ENCODE measurements at regions of chr3 and their contacts with region 1.

Region 1: DNA sequence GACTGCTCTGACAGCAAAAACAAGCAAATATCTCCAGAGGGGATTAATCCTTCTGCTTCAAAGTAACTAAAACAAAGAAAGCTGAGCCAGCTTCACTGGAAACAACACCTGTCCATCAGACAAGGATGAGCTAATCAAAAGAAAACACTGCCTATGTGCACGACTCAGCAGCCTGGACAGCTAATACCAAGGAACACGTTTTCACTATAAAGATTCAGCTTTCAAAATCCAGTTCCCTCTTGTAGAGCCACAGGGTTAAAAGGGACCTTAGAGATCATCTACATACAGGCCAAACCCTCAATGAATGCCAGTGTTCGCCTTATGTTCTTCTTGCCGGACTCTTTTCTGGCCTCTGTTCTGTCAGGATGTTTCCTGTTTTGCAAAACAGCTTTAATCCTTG is 6.9 kb downstream of the TUSC7 start:
- DNase-seq: peak; percentile 45 to 47
- H3K4me3 ChIP-seq: no peak overlapping the region
- H3K4me3 Mint-ChIP-seq: no peak overlapping the region
- H3K27ac Mint-ChIP-seq: peak overlapping the region; percentile 14
- H3K4me1 ChIP-seq: peaks cover 34% of the 10 kb centered on the region
- H3K4me1 Mint-ChIP-seq: peaks cover 37% of the 10 kb centered on the region
- H3K27me3 ChIP-seq: no peaks in the 10 kb centered on the region
- H3K27me3 Mint-ChIP-seq: no peaks in the 10 kb centered on the region
- CTCF ChIP-seq: no peak

Region 2: DNA sequence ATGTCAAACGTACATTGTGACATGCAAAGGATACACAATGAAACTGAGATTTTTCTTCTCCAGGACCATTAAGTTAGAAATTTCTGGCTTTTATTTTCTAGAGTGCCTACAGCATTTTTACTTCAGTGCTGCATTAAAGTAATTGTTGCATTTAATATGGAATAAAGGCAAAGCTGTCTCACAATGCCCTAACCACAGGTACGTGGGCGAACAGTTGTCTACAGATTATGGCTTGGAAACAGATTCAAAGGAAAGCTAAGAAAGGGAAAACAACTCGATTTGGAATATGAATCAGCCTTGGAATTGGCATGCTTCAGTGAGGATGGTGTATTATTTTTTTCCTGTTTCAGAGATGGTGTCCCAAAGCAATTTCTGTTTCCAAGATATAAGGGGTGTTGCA is 86.0 kb before region 1 on chr3:
- CTCF ChIA-PET with region 1: no interaction called
- POLR2A ChIA-PET with region 1: no interaction called
- intact Hi-C with region 1: loop called (anchors 5 kb)
- DNase-seq: no peak
- H3K4me3 ChIP-seq: no peak overlapping the region
- H3K4me3 Mint-ChIP-seq: no peak overlapping the region
- H3K27ac Mint-ChIP-seq: no peak overlapping the region
- H3K4me1 ChIP-seq: peaks cover 3% of the 10 kb centered on the region; the same call in 1 of the 2 replicates
- H3K4me1 Mint-ChIP-seq: no peaks in the 10 kb centered on the region
- H3K27me3 ChIP-seq: no peaks in the 10 kb centered on the region
- H3K27me3 Mint-ChIP-seq: peaks cover 3% of the 10 kb centered on the region
- CTCF ChIP-seq: no peak

Region 3: DNA sequence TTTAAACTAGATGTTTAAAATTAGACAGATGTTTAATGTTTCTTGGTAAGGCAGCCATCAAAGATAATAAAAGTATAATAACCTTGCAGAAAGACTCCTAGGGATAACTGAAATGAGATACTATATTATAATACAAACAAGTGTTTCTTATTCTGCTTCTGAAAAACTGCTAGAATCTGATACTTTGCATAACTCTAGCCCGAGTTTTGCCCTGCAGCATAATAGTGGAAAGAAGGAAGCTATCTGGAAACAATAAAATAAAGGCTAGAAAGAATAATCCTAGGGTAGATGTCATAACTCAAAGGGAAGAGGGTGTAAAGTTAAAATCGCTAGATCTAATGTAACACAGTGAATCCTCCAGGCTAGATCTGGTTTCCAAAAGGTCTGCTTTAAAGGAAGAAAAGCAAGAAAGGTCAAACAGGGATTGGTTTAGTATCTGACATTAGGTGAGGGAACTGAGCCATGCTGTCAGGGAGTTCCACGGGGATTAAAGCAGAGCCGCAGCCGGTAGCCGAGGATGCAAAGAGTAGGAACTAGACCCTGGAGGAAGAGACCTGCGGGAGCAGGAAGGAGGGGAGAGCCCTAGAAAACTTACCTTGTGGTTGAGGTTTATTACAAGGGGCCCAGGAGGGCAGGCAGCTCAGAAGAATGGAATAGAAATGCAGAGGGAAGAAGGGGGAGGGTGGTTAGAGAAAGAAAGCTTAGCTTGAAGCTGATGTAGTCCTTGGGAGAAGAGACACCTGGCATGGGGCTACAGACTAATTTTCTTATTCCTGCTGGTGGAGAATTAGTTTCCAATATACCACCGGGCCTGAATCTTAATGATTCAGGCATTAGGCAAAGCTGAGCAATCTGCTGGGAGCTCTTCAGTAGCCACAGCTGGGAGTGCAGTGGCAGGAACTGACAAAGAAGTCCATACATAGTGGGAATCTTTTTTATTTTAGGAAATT is 53.1 kb before region 1 on chr3:
- CTCF ChIA-PET with region 1: no interaction called
- POLR2A ChIA-PET with region 1: no interaction called
- intact Hi-C with region 1: loop called (anchors 1 kb)
- DNase-seq: no peak
- H3K4me3 ChIP-seq: no peak overlapping the region
- H3K4me3 Mint-ChIP-seq: no peak overlapping the region
- H3K27ac Mint-ChIP-seq: peak overlapping the region; percentile 27
- H3K4me1 ChIP-seq: peaks cover 8% of the 10 kb centered on the region
- H3K4me1 Mint-ChIP-seq: peaks cover 17% of the 10 kb centered on the region
- H3K27me3 ChIP-seq: no peaks in the 10 kb centered on the region
- H3K27me3 Mint-ChIP-seq: no peaks in the 10 kb centered on the region
- CTCF ChIP-seq: no peak

Region 4: GRCh38 chr3:116702334-116702733 is 14.2 kb before region 1 on chr3:
- CTCF ChIA-PET with region 1: no interaction called
- POLR2A ChIA-PET with region 1: no interaction called
- intact Hi-C with region 1: no loop called
- DNase-seq: no peak
- H3K4me3 ChIP-seq: no peak overlapping the region
- H3K4me3 Mint-ChIP-seq: no peak overlapping the region
- H3K27ac Mint-ChIP-seq: no peak overlapping the region
- H3K4me1 ChIP-seq: no peaks in the 10 kb centered on the region
- H3K4me1 Mint-ChIP-seq: no peaks in the 10 kb centered on the region
- H3K27me3 ChIP-seq: no peaks in the 10 kb centered on the region
- H3K27me3 Mint-ChIP-seq: peaks cover 5% of the 10 kb centered on the region
- CTCF ChIP-seq: no peak

Region 5: DNA sequence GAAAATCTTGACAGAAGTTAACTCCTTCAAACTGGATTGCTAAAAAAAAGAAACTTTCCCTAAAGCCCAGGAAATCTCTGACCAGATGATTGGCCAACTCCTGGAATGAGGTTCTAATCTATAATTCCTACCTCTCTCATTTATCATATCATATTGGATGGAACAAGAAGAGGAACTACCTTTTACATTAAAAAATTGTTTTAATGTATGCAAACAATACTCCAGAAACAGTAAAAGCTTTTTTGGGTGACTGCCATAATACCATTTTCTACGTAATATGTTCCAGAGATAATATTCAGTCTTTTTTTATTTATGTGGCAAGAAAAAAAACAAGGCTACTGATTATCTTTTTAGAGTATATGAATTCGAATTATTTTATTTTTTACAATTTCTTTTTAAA is 197.5 kb after region 1 on chr3:
- CTCF ChIA-PET with region 1: no interaction called
- POLR2A ChIA-PET with region 1: no interaction called
- intact Hi-C with region 1: no loop called
- DNase-seq: no peak
- H3K4me3 ChIP-seq: no peak overlapping the region
- H3K4me3 Mint-ChIP-seq: no peak overlapping the region
- H3K27ac Mint-ChIP-seq: no peak overlapping the region
- H3K4me1 ChIP-seq: no peaks in the 10 kb centered on the region
- H3K4me1 Mint-ChIP-seq: no peaks in the 10 kb centered on the region
- H3K27me3 ChIP-seq: no peaks in the 10 kb centered on the region
- H3K27me3 Mint-ChIP-seq: peaks cover 3% of the 10 kb centered on the region
- CTCF ChIP-seq: no peak

Region 6: DNA sequence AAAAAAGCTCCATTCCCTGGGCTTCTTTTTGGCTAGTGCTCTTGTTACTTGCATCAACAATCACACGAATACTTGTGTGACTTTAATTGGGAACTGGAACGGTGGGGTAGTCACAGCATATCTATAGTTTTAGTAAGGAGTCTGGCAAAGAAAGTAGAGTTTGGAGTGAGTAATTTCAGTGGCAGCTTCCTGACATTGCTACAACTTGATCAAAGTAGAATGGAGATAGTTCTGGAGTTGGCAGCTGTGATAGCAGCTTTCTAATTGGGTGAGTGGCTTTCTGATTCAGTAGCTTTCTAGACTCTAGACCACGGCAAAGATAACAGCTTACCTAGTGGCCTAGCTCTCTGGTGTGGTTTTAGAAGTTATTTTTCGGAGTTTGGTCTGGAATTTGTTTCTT is 468.1 kb after region 1 on chr3:
- CTCF ChIA-PET with region 1: no interaction called
- POLR2A ChIA-PET with region 1: no interaction called
- intact Hi-C with region 1: no loop called
- DNase-seq: no peak
- H3K4me3 ChIP-seq: no peak overlapping the region
- H3K4me3 Mint-ChIP-seq: no peak overlapping the region
- H3K27ac Mint-ChIP-seq: no peak overlapping the region
- H3K4me1 ChIP-seq: no peaks in the 10 kb centered on the region
- H3K4me1 Mint-ChIP-seq: no peaks in the 10 kb centered on the region
- H3K27me3 ChIP-seq: no peaks in the 10 kb centered on the region
- H3K27me3 Mint-ChIP-seq: peaks cover 3% of the 10 kb centered on the region
- CTCF ChIP-seq: no peak